Activated T-helper 1 cell treated with anti-CD3 and anti-CD28 coated beads, Interleukin-12 subunit alpha, Interleukin-12 subunit beta, Interleukin-2, Interleukin-4 antibody, amounts not matched to agents 30 ng/mL and 10 ng/mL and 1 ng/mL, durations not matched to agents 14 hours and 24 hours and 36 hours (primary cell): ENCODE measurements at regions of chr10 and their contacts with region 1.

Region 1: DNA sequence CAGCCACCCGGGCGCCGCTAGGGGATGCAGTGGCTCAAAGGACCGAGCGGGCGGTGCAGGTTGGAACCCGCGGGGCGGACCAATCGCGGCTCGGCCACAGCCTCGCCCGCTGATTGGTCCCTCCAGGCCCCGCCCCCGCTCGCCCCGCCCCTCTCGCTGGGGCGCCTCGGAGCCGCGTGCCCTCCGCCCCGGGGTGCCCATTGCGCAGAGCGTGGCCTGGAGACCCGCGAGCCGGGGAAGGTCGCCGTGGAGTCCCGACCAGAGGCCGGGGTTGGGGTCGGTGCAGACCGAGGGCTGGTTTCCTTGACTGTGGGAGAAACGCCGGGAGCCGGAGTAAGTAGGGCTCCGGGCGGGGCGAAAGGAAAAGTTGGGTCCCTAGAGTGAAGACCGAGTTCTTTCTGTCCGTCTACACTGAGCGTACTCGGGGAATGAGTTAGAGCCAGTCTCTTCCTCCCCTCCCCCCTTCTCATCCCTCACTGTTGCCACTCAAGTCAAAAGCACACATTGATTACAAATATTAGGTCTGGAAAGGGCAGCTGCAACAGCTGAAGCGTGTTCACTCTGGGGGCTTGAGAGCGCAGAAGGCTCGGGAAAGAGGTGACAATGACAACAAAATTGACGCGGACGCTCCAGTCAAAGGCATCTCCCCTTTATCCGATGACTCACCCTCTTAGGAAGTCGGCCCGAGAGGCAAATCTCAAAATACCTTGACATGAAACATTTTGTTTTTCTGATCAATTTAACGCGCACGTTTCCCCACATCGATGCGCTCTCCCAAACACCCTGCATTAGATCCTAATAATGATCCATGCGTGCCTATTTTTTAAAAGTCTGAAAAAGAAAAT is 820 bp upstream of the GATA3 start:
- DNase-seq: peak; percentile 90
- H3K4me3 Mint-ChIP-seq: peak overlapping the region; percentile 99
- H3K27ac Mint-ChIP-seq: peak overlapping the region; percentile 99
- H3K4me1 Mint-ChIP-seq: peaks cover 44% of the 10 kb centered on the region
- H3K27me3 Mint-ChIP-seq: peaks cover 22% of the 10 kb centered on the region

Region 2: GRCh38 chr10:7872041-7872442 is 181.6 kb before region 1 on chr10:
- intact Hi-C with region 1: loop called (anchors 5 kb)
- DNase-seq: no peak
- H3K4me3 Mint-ChIP-seq: peak overlapping the region; percentile 53
- H3K27ac Mint-ChIP-seq: no peak overlapping the region
- H3K4me1 Mint-ChIP-seq: no peaks in the 10 kb centered on the region
- H3K27me3 Mint-ChIP-seq: peaks cover 4% of the 10 kb centered on the region

Region 3: DNA sequence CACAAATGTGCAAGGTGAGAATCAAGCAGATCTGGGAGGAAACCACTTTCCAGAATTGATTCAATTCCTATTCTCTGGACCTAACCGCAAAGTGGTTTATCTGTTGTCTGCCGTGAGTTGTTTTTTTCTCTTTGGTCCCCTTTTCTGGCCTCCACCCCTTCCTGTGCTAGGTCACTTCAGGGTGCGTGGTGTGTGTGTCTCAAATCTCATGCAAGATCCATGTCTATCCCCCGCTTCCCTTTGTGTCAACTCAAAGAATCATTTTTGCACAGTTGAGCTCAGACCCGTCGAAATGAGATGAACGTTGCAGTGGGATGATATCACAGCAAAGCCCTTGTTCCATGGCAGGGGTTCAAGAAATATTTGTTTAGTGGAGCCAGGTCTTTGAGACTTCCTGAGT is 185.3 kb after region 1 on chr10:
- intact Hi-C with region 1: loop called (anchors 1 kb)
- DNase-seq: peak; percentile 37
- H3K4me3 Mint-ChIP-seq: peak overlapping the region; percentile 41
- H3K27ac Mint-ChIP-seq: peak overlapping the region; percentile 75
- H3K4me1 Mint-ChIP-seq: peaks cover 66% of the 10 kb centered on the region
- H3K27me3 Mint-ChIP-seq: no peaks in the 10 kb centered on the region

Region 4: DNA sequence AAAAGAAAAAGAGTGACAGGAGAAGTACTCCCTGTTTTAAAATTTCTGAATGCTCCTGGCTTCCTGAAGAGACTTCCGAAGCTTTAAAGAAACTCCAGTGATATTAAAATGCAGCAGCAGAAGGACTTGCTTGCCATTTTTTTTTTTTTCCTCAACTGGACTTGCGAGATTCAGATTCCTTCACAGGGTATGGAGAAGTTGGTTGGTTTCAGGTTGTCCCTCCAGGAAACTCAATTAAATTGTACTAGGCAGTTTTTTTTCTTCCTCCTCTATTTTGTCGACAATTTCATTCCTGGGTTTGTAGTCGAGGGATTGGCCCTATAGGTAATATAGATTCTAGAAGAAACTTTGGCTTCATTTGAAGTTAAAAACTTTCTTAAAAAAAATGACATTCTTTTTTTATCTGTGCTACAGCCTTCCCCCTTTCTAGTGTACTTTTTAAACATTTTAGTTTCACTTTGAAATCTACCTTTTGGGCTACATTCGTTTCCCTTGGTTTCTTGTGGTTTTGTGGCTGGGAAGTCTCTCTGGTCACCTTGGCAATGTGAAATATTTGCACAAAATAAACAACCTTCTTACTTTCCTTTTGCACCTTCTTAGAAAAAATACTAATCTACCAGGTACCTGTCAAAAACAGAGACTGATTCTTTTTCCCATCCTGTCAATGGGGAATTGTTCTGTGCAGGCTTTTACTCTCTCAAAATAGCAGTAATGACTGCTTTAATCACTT is 350.9 kb after region 1 on chr10:
- intact Hi-C with region 1: loop called (anchors 1 kb)
- DNase-seq: peak; percentile 68
- H3K4me3 Mint-ChIP-seq: peak overlapping the region; percentile 57
- H3K27ac Mint-ChIP-seq: peak overlapping the region; percentile 89
- H3K4me1 Mint-ChIP-seq: peaks cover 68% of the 10 kb centered on the region
- H3K27me3 Mint-ChIP-seq: peaks cover 10% of the 10 kb centered on the region

Region 5: DNA sequence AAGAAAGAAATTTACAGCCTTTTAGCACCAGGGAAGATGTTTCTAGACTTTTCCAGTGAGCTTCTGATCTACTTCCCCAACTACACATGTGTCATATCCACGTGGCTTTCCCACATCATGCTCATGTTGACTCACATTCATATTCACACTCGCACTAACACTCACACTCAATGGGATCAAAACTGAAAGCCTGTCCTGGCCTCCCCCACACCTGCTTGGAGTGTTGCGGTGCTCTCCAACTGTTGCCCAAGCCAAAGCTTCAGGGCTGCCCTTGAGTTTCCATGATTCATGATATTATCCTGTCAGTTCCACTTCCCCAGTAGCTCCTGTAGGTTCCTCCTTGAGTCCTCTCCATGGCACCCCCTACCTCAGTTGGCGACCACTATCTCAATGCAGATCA is 445.2 kb after region 1 on chr10:
- intact Hi-C with region 1: no loop called
- DNase-seq: no peak
- H3K4me3 Mint-ChIP-seq: no peak overlapping the region
- H3K27ac Mint-ChIP-seq: no peak overlapping the region
- H3K4me1 Mint-ChIP-seq: peaks cover 6% of the 10 kb centered on the region
- H3K27me3 Mint-ChIP-seq: peaks cover 23% of the 10 kb centered on the region

Region 6: DNA sequence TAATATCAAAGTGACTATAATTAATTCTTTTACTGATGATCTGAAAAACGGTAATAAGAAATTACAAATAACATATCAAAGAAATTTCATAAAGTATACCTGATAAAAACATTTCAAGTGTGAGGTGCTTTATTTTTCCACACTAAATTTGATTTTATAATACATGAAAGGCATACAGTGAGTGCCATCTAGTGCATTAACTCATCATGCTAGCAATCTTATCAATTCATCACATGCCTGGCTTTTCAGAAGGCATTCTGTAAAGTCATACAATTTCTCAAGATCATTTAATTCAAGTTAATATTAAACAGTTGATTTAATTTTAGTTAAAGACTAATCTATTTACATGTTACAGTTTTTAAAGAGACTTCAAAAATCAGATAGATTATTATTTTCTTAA is 1021.8 kb after region 1 on chr10:
- intact Hi-C with region 1: loop called (anchors 10 kb)
- DNase-seq: no peak
- H3K4me3 Mint-ChIP-seq: no peak overlapping the region
- H3K27ac Mint-ChIP-seq: no peak overlapping the region
- H3K4me1 Mint-ChIP-seq: no peaks in the 10 kb centered on the region
- H3K27me3 Mint-ChIP-seq: no peaks in the 10 kb centered on the region